ENCODE measurements at regions of chr1 and their contacts with region 1.

Region 1: GRCh38 chr1:15323351-15323988 is 76.4 kb downstream of the FHAD1 start:
- DNase-seq: peak; percentile 73
- ATAC-seq: peak; percentile 85

Region 2: DNA sequence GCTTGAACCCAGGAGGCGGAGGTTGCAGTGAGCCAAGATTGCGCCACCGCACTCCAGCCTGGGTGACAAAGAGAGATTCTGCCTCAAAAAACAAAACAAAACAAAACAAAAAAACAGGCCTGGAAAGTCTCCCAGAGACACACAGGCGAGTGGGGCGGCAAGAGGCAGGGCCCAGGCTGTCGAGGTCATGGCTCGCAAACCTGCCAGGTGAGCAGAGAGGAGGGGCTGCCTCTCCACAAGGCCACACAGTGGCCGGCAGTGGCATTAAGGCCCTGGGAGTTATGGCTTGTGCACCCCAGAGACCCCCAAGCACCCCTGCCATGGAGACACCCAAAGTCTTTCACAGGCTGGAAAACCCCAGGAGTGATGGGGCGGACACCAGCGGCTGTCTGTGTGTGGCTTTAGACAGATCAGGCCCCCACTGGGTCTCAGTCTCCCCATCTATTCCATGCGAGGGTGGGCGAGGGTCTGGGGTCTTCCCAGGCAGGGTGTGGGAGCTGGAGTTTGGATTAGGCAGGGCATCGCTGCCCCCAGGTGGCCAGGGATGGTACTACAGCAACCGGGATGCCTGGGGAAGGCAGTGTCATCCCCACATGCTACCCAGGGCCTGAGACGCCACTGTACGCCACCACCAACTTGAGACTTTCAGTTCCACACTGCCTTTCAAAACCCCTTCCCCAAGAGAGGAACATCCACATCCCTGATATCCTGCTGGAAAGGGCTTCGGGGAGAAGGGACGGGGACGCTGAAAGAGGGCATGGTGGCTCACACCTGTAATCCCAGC is 107.5 kb after region 1 on chr1:
- intact Hi-C with region 1: loop called (anchors 1 to 2 kb)
- DNase-seq: peak; percentile 65
- ATAC-seq: peak; percentile 50 to 54

Region 3: DNA sequence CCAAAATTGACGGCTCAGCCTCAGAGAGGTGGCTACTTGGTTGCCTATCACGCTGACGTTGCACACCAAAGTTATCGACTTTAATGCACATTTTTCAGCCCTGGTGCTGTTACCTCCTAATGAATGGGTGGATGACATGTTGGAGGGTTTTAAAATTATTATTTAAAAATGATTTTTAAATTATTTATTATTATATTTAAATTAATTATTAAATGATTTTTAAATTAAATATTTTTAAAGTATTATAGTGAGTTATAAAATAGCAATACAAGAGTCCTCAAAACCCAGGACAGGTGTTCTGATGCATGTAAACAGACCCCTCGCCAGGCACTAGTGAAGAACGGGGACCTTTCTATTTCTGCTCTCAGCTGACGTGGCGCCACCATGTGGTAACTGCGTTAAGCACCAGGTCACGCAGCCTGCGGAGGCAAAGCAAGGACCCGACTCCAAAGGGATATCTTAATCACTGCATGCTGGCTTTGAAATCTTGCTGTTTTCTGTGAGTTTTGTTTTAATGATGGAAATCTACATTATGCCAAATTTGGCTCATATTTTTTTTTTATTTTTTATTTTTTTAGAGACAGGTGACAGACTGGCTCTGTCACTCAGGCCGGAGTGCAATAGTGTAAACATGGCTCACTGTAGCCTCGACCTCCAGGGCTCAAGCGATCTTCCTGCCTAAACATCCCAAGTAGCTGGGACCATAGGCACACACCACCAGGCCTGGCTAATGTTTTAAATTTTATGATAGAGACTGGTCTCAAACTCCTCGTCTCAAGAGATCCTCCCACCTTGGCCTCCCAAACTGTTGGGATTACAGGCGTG is 177.9 kb after region 1 on chr1:
- intact Hi-C with region 1: loop called in 1 of 2 experiments (anchors 10 kb)
- DNase-seq: peak; percentile 59
- ATAC-seq: peak in 1 of 2 donors; percentile 44

Region 4: DNA sequence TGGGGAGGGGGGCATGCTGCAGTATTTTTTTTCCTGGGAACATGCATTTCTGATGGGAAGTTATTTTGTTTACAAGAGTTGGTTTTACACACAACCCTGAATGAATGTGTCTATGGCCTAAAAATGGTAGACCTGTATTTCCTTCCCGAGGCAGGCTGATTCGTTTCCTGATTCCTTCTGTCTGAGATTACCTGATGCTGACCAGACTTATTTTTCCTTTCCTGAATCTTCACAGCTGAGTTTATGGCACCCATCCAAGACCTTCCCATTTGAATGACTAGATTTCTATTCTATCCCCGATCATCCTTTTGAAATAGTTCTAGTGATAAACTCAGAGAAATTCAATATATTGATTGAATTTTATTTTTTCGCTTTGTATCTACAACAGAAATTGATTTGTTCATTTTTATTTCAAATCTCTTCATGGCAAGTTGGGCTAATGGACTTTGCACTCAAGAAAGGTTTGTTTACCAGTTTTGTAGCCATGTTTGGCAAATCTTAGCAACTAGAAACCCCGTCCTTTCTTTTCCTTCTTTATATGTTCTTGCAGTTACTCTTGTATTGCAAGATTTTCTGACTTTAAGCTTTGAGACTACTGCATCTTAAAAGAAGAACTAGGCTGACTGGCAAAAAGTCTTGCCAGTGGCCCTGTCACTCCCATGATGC is 344.8 kb after region 1 on chr1:
- intact Hi-C with region 1: no loop called
- DNase-seq: no peak
- ATAC-seq: no peak

Measured in left cardiac atrium (tissue), 4 donors.